CD14-positive monocyte (primary cell): ENCODE measurements at regions of chr10 and their contacts with region 1.

Region 1: GRCh38 chr10:72625608-72626443 is at the start of gene MICU1:
- DNase-seq: peak; percentile 91 to 92 (median 92)
- H3K4me3 ChIP-seq: peak within 1 kb of the TSS; percentile 73 to 100 (median 98)
- H3K4me3 Mint-ChIP-seq: peak within 1 kb of the TSS; percentile 97 to 100
- H3K27ac ChIP-seq: peak within 1 kb of the TSS; percentile 91 to 93
- H3K27ac Mint-ChIP-seq: peak within 1 kb of the TSS; percentile 91 to 99 (median 95)
- H3K4me1 ChIP-seq: peaks cover 17 to 31% of the 10 kb centered on the region in 2 donors
- H3K4me1 Mint-ChIP-seq: peaks cover 17% of the 10 kb centered on the region
- H3K27me3 ChIP-seq: no peaks in the 10 kb centered on the region
- H3K27me3 Mint-ChIP-seq: no peaks in the 10 kb centered on the region
- CTCF ChIP-seq: no peak
- polyA plus RNA-seq, gene MICU1: 51.1 to 76.4 (median 51.7) TPM

Region 2: GRCh38 chr10:72419241-72419640 is 206.6 kb before region 1 on chr10:
- intact Hi-C with region 1: no loop called
- DNase-seq: no peak
- H3K4me3 ChIP-seq: no peak overlapping the region
- H3K4me3 Mint-ChIP-seq: no peak overlapping the region
- H3K27ac ChIP-seq: no peak overlapping the region
- H3K27ac Mint-ChIP-seq: peak overlapping the region in 1 of 7 donors; percentile 53
- H3K4me1 ChIP-seq: no peaks in the 10 kb centered on the region
- H3K4me1 Mint-ChIP-seq: peaks cover 9% of the 10 kb centered on the region
- H3K27me3 ChIP-seq: no peaks in the 10 kb centered on the region
- H3K27me3 Mint-ChIP-seq: peaks cover 0 to 2% (median 0%) of the 10 kb centered on the region in 3 donors
- CTCF ChIP-seq: no peak

Region 3: GRCh38 chr10:72511459-72511858 is 114.4 kb before region 1 on chr10:
- intact Hi-C with region 1: loop called in 1 of 2 experiments (anchors 10 kb)
- DNase-seq: peak; percentile 79 to 95 (median 87)
- H3K4me3 ChIP-seq: peak overlapping the region in 1 of 3 experiments; percentile 38
- H3K4me3 Mint-ChIP-seq: peak overlapping the region; percentile 61 to 80
- H3K27ac ChIP-seq: peak overlapping the region; percentile 80 to 86
- H3K27ac Mint-ChIP-seq: peak overlapping the region; percentile 97 to 100 (median 99)
- H3K4me1 ChIP-seq: peaks cover 44 to 57% of the 10 kb centered on the region in 2 donors
- H3K4me1 Mint-ChIP-seq: peaks cover 53% of the 10 kb centered on the region
- H3K27me3 ChIP-seq: no peaks in the 10 kb centered on the region
- H3K27me3 Mint-ChIP-seq: no peaks in the 10 kb centered on the region
- CTCF ChIP-seq: no peak

Region 4: GRCh38 chr10:72692057-72692910 is 66.5 kb after region 1 on chr10 and contains the start of gene MCU:
- intact Hi-C with region 1: loop called (anchors 5 kb)
- DNase-seq: peak; percentile 85 to 92 (median 88)
- H3K4me3 ChIP-seq: peak within 1 kb of the TSS; percentile 63 to 95 (median 83)
- H3K4me3 Mint-ChIP-seq: peak within 1 kb of the TSS; percentile 84 to 96
- H3K27ac ChIP-seq: peak within 1 kb of the TSS; percentile 71 to 72
- H3K27ac Mint-ChIP-seq: peak within 1 kb of the TSS in 5 of 7 donors; percentile 66 to 88 (median 81)
- H3K4me1 ChIP-seq: peaks cover 43 to 46% of the 10 kb centered on the region in 2 donors
- H3K4me1 Mint-ChIP-seq: peaks cover 46% of the 10 kb centered on the region
- H3K27me3 ChIP-seq: no peaks in the 10 kb centered on the region
- H3K27me3 Mint-ChIP-seq: peaks cover 0 to 1% (median 0%) of the 10 kb centered on the region in 3 donors
- CTCF ChIP-seq: no peak
- polyA plus RNA-seq, gene MCU: 11.7 to 23.1 (median 16.5) TPM

Region 5: DNA sequence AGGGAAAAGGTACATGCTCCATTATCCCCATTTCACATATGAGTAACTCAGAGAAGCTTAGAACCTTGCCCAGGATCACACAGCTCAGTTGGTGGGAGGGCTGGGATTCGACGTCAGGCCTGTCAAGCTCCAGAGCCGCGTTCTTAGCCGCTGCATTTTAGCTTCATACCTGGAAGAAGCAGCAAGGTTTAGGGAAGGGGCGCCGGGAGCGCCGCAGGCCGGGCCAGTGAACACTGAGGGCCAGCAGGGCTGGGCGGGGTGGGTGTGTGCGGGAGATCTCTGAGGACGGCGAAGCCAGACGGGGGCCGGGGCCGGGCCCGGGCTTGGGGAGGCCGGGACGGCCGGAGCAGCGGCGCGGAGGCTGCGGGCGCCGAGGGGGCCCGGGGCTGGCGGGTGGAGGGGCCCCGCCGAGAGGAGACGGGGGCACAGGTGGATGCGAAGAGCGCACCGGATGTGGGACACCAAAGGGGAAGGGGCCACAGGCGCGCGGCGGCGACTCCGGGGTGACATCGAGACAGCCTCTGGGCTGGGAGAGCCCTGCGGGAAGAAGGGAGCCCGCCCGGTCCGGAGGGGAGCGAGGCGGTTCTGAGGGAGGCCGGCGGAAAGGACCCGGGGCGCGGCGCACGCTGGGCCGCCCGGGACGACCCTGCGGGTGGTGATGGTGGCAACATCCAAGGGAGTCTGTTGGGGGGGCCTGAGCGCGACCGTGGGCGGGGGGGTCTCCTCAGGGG is 1185.1 kb after region 1 on chr10:
- intact Hi-C with region 1: no loop called
- DNase-seq: peak in 2 of 3 donors; percentile 16 to 40
- H3K4me3 ChIP-seq: peak overlapping the region; percentile 69 to 93 (median 72)
- H3K4me3 Mint-ChIP-seq: peak overlapping the region; percentile 90 to 94
- H3K27ac ChIP-seq: peak overlapping the region; percentile 81 to 91
- H3K27ac Mint-ChIP-seq: peak overlapping the region; percentile 92 to 97 (median 93)
- H3K4me1 ChIP-seq: peaks cover 27 to 31% of the 10 kb centered on the region in 2 donors
- H3K4me1 Mint-ChIP-seq: peaks cover 39% of the 10 kb centered on the region
- H3K27me3 ChIP-seq: no peaks in the 10 kb centered on the region
- H3K27me3 Mint-ChIP-seq: no peaks in the 10 kb centered on the region
- CTCF ChIP-seq: no peak